Right cardiac atrium (tissue), 5 donors: ENCODE measurements at regions of chr2 and their contacts with region 1.

Region 1: DNA sequence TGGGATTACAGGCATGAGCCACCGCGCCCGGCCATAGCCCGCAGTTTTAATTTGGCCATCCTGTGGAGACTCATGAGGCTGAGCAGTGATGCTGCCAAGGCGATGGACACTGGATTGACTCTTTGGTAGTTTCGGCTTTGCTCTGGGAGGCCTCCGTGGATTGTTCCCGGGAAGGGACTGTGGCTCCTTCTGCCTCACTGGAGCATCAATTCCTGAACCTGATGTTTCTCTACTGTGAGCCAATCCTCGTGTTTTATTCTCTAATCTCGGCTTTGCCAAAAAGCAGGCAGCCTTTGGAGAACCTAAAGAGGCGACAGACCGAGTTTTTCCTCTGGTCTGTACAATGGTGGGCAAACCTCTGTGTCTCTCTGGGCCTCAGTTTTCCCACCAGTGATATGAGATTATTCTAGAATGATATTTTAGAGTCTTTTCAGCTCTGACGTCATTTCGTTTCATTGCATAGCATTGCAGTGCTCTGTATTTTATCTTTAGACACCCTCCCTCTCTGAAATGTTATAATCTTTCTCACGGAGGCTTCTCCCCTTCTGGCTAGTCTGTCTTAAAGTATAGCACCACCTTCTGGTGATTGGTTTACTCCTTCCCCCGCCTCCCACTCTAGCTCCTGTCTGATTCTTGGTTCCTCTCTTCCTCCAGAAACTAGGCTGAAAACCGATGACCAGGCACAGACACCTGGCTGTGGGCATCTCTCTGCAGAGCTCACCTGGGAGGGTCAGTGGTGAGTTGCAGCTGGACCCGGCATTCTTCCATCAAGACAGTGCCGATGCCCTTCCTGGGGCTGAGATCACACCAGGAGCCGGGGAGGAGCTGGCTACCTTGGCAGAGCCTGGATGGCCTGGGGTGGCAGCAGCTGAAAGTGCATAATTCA is 341.3 kb downstream of the MYCN start:
- DNase-seq: no peak
- ATAC-seq: peak; percentile 69 to 74
- H3K4me3 ChIP-seq: no peak overlapping the region
- H3K27ac ChIP-seq: no peak overlapping the region
- H3K4me1 ChIP-seq: no peaks in the 10 kb centered on the region
- H3K27me3 ChIP-seq: no peaks in the 10 kb centered on the region

Region 2: GRCh38 chr2:15649556-15650255 is 632.0 kb before region 1 on chr2:
- intact Hi-C with region 1: loop called in 1 of 4 experiments (anchors 10 kb)
- DNase-seq: no peak
- ATAC-seq: no peak
- H3K4me3 ChIP-seq: no peak overlapping the region
- H3K27ac ChIP-seq: no peak overlapping the region
- H3K4me1 ChIP-seq: no peaks in the 10 kb centered on the region
- H3K27me3 ChIP-seq: no peaks in the 10 kb centered on the region

Region 3: GRCh38 chr2:16691261-16691660 is 409.6 kb after region 1 on chr2:
- intact Hi-C with region 1: no loop called
- DNase-seq: no peak
- ATAC-seq: no peak
- H3K4me3 ChIP-seq: no peak overlapping the region
- H3K27ac ChIP-seq: no peak overlapping the region
- H3K4me1 ChIP-seq: no peaks in the 10 kb centered on the region
- H3K27me3 ChIP-seq: no peaks in the 10 kb centered on the region